Dendritic cell treated with granulocyte-macrophage colony-stimulating factor and Interleukin-4, amounts not matched to agents 40 ng/mL and 50 ng/mL, for 4 days (primary cell): ENCODE measurements at regions of chr7 and their contacts with region 1.

Region 1: DNA sequence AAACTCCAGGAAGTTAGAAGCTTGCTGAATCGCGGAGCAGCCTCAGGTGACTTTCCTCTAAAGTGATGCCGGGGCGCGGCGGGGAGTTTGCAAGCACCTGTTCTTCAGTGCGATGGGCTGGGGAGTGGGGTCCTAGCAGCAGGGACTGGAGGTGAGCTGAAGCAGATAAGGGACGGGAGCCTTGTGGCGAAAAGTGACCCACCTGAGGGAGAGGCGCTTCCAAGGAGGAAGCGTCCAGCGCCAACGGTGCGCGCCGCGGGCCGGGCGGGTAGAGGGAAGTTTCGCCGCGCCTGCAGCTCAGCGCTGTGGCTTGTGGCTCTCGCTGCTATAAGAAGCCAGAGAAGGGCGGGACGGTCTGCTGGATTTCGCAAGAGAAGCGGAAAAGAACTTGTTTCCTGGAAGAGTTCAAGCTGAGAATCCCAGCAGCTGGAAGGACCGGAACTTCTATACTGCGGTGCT is at the start of gene STEAP4:
- H3K4me3 Mint-ChIP-seq: peak within 1 kb of the TSS; percentile 73
- H3K27ac Mint-ChIP-seq: peak within 1 kb of the TSS; percentile 69
- H3K4me1 Mint-ChIP-seq: peaks cover 55% of the 10 kb centered on the region
- H3K27me3 Mint-ChIP-seq: no peaks in the 10 kb centered on the region

Region 2: GRCh38 chr7:88291398-88292173 is 15.0 kb before region 1 on chr7:
- intact Hi-C with region 1: no loop called
- H3K4me3 Mint-ChIP-seq: no peak overlapping the region
- H3K27ac Mint-ChIP-seq: no peak overlapping the region
- H3K4me1 Mint-ChIP-seq: peaks cover 19% of the 10 kb centered on the region
- H3K27me3 Mint-ChIP-seq: no peaks in the 10 kb centered on the region

Region 3: GRCh38 chr7:88322151-88322550 is 15.5 kb after region 1 on chr7:
- intact Hi-C with region 1: loop called (anchors 2 kb)
- H3K4me3 Mint-ChIP-seq: no peak overlapping the region
- H3K27ac Mint-ChIP-seq: peak overlapping the region; percentile 82
- H3K4me1 Mint-ChIP-seq: peaks cover 56% of the 10 kb centered on the region
- H3K27me3 Mint-ChIP-seq: no peaks in the 10 kb centered on the region

Region 4: DNA sequence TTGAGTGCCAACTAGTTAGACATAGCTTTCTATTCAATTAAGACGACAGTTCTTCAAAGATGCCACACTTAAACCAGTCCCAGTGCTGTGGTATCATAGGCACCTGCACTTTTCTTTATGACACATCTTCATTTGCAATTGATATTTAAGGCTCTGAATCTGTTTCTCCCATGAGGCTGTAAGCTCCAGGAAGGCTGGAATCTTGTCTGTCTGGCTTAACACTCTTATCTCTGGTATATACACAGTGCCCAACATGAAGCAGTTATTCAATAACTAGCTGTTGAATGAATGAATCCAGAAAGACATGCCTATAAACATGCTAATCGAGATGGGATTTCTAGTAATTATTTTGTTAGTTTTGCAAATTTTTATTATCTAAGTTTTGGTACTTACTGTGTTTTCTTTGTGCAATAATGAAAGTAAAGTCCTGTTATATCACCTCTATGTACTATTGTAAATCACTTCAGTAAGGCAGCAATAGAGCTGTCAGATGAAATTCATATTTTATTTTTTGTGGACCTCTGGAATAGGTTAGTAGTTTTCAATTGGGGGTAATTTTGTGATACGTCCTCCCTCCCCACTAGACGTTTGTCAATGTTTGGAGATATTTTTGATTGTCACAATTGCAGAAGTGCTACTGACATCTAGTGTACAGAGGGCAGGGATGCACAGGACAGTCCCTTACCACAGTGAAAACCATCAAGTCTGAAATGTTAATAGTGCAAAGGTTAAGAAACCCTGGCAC is 51.3 kb after region 1 on chr7:
- intact Hi-C with region 1: loop called (anchors 5 kb)
- H3K4me3 Mint-ChIP-seq: peak overlapping the region; percentile 26
- H3K27ac Mint-ChIP-seq: no peak overlapping the region
- H3K4me1 Mint-ChIP-seq: peaks cover 33% of the 10 kb centered on the region
- H3K27me3 Mint-ChIP-seq: no peaks in the 10 kb centered on the region